ENCODE measurements at regions of chr17 and their contacts with region 1.

Region 1: DNA sequence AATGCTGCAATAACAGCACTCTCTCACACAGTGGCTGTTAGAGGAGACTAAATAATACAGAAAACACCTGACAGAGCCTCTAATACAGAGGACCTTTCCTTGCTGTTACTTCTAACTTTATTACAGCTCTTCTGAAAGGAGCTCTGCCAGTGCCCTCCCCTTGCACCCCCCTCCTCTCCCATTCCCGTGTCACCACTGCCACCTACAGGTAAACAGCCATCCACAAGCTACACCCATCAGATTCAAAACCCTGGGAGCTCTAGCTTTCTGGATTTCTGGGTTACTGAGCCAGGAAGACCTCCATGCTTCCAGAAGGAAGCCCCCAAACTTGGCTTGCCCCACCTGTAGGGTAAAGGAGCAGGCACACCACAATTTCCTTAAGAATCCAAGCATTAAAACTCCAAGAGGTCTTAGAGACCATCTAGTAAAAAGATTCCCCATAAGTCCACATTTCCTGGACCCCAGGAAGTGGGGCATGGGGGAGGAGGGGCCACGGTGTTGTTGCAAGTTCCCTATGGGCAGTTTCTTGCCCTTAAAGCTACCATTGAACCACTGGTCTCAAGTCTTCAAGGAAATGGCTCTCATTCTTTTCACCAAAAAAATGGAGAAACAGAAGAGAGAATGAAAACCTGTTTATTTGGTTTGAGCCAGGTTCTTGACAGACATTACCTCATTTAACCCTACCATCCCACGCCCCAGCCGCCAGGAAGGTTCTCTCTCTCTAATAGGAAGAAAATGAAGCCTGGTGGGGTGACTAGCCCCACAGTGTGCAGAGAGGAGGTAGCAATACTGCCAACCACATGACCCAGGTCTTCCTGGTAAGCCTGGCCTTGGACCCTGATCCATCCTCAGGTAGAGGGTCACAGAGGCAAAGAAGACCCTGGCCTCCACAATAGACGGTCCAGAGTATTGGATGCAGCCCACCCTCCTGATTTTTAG is 52.8 kb downstream of the TOM1L2 start:
- DNase-seq: peak; percentile 90
- ATAC-seq: peak; percentile 59
- H3K4me3 ChIP-seq: no peak overlapping the region
- H3K27ac ChIP-seq: peak overlapping the region; percentile 29
- H3K4me1 ChIP-seq: peaks cover 55% of the 10 kb centered on the region
- H3K27me3 ChIP-seq: no peaks in the 10 kb centered on the region
- CTCF ChIP-seq: peak; percentile 96

Region 2: DNA sequence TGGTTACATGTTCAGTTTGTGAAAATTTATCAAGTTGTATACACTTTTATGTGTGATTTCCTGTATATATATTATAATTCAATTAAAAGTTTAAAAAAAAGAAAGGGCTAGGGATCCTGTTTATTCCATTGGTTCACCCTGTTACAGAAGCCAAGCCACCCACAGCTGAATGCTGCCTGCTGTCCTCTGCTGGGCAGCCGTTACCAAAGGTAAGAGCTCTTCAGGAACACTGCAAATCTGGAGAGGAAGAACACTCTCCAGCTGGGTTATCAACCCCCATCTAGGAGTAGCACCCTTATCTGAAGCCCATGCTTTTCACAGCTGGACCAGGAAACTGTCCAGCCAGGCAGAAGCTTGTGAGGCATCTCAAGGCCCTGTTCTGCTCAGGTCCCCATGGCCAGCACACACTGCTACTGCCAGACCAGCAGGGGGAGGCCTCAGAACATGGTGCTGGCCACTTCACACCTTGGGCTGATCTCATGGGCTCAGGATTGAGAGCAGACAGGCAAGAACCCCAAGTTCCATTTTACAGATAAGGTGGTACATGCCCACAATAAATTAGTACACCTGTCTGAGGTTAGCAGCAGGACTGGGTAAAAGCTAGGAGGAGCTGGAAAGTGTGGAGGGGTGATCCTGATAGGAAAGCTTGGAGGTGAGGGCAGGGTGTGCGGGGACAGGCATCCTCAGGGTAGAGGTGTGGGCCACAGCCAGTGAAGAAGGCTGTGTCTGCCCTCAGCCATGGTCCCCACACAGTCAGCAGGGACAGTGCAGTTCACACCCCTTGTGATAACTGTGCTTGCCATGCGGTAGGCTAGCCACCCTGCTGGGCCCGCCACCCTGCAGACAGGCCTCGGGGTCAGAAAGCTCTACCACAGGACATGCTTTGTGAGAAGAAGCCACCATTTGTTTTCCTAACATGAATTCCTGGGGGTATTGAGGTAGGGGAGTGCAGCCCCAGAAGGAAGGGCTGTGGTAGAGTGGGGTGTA is 28.4 kb before region 1 on chr17:
- CTCF ChIA-PET with region 1: interaction called, 21 read pairs
- POLR2A ChIA-PET with region 1: interaction called, 3 read pairs
- intact Hi-C with region 1: loop called (anchors 1 kb)
- DNase-seq: peak; percentile 73
- ATAC-seq: peak; percentile 99
- H3K4me3 ChIP-seq: no peak overlapping the region
- H3K27ac ChIP-seq: no peak overlapping the region
- H3K4me1 ChIP-seq: no peaks in the 10 kb centered on the region
- H3K27me3 ChIP-seq: no peaks in the 10 kb centered on the region
- CTCF ChIP-seq: peak; percentile 97

Region 3: DNA sequence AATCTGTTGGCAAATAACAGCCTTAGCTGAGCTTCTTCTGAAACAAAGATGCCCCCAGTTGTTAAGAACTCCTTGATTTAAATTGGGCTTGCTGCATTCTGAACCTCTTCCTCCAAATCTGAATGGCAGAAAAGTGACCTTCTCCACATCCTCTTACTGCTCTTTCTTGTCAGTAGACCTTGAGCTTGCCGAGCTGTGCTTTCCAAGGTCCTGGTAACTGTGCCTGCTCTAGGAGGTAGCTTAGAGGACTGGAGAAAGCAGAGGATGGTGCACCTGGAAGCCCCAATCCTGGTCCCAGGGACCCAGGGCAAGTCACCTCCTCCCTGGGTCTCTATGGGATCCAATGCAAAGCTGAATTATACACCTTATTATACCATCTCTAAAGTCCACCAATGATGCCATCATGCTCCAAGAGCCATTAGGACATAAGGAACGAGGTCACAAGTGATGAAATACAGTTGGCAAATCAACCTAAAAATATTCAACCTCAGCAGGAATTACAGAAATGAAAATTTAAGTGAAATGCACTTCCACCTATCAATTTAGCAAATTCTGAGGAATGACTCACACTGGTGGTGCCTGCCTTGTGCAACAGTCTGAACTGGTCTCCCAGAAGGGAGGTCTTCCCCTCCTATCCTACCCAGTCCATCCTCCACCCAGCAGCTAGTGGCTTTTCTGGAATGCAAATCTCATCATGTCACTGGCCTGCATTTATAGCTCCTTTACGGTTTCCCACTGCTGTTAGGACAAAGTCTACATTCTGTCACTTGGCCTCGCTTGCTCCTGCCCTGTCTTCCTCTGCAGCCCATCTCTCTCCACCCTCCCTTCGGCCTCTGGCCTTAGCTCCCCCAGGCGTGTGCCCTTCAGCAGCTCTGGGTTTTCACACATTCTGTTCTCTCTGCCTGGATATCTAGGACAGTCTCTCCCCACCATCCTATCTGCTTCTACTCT is 16.2 kb after region 1 on chr17:
- CTCF ChIA-PET with region 1: interaction called, 10 read pairs
- POLR2A ChIA-PET with region 1: no interaction called
- intact Hi-C with region 1: no loop called
- DNase-seq: peak; percentile 86
- ATAC-seq: peak; percentile 70
- H3K4me3 ChIP-seq: no peak overlapping the region
- H3K27ac ChIP-seq: peak overlapping the region; percentile 12
- H3K4me1 ChIP-seq: peaks cover 42% of the 10 kb centered on the region
- H3K27me3 ChIP-seq: no peaks in the 10 kb centered on the region
- CTCF ChIP-seq: no peak

Region 4: GRCh38 chr17:17959520-17960361 is 40.3 kb after region 1 on chr17:
- CTCF ChIA-PET with region 1: interaction called, 6 read pairs
- POLR2A ChIA-PET with region 1: interaction called, 3 read pairs
- intact Hi-C with region 1: loop called (anchors 5 kb)
- DNase-seq: no peak
- ATAC-seq: no peak
- H3K4me3 ChIP-seq: peak overlapping the region; percentile 0; the same call in 1 of the 2 replicates
- H3K27ac ChIP-seq: peak overlapping the region; percentile 97
- H3K4me1 ChIP-seq: peaks cover 41% of the 10 kb centered on the region
- H3K27me3 ChIP-seq: no peaks in the 10 kb centered on the region
- CTCF ChIP-seq: no peak

Region 5: DNA sequence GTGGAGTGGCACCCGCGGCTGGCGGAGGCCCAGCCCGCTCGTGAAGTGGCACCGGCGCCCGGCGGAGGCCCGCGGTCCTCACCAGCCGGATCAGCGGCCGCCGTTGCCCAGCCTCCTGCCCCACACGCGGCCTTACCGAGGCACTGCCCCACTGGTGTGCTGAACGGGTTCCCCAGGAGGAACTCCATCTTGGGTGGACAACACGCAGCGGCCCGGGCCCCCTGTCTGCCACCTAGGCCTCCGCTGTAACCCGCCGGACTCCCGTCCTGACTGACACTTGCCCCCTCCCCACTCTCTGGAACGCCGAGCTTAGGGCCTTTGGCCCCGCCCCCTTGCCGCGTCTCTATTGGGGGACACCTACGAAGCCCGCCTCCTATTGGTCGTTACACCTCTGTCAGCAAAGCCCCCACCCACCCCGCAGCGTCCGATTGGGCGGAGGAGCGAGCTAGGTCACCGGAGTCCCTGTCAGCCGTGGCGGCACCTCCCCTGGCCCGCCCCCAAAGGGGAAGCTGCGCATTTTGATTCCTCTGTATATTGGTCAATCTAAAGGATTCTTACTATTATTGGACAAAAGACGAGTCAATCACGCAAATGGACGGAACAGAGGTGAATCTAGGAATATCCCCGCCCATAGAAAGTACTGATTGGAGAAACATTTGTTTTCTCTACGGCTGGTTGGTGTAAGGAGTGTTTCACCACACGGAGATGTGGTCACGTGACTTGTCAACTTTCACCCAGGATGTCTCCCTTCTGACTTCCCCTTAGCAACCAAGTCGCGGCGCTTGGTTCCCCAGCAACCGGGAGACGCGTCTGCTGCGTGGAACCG is 52.9 kb after region 1 on chr17 and contains the starts of genes DRC3 and TOM1L2:
- CTCF ChIA-PET with region 1: interaction called, 6 read pairs
- POLR2A ChIA-PET with region 1: interaction called, 12 read pairs
- intact Hi-C with region 1: loop called (anchors 1 kb)
- DNase-seq: peak; percentile 100
- ATAC-seq: peak; percentile 90
- H3K4me3 ChIP-seq: peak within 1 kb of the TSS; percentile 80
- H3K27ac ChIP-seq: peak within 1 kb of the TSS; percentile 30
- H3K4me1 ChIP-seq: peaks cover 13% of the 10 kb centered on the region
- H3K27me3 ChIP-seq: no peaks in the 10 kb centered on the region
- CTCF ChIP-seq: no peak
- total RNA-seq, gene DRC3: 1.9 and 2.2 TPM in 2 replicates
- total RNA-seq, gene TOM1L2: 53.3 and 77.1 TPM in 2 replicates

Region 6: DNA sequence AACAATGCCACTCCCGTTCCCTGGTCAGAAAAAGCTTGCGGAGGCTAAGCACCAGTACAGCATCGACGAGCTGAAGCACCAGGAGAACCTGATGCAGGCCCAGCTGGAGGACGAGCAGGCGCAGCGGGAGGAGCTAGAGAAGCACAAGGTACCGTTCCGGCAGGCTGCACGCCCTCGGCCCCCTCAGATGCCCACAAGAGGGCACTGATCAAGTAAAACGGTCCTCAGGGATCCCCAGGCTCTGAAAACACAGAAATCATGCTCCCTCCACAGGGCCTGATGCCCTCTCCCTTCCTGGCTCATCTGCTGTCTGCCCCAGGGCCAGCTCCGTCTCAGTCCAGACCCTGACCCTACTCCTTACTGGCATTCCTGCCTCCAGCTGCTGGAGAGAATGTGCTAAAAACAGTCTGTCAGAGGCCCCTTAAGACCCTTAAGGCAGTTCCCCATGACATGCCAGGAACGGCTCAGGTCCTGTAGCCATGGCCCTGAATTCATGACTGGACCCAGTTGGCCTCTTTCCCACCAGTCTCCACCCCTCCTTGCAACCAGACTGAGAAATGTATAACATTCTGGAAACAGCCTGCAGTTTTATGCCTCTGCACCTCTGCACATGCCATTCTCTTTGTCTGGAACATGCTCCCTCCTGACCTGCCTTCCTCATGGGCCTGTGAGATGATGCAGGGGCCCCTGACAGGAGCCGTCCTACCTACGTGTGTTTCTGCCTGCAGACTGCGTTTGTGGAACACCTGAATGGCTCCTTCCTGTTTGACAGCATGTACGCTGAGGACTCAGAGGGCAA is 75.0 kb after region 1 on chr17:
- CTCF ChIA-PET with region 1: no interaction called
- POLR2A ChIA-PET with region 1: no interaction called
- intact Hi-C with region 1: loop called (anchors 1 kb)
- DNase-seq: peak; percentile 35
- ATAC-seq: peak; percentile 7; the same call in 1 of the 2 replicates
- H3K4me3 ChIP-seq: no peak overlapping the region
- H3K27ac ChIP-seq: no peak overlapping the region
- H3K4me1 ChIP-seq: peaks cover 18% of the 10 kb centered on the region
- H3K27me3 ChIP-seq: no peaks in the 10 kb centered on the region
- CTCF ChIP-seq: peak; percentile 57

Region 7: DNA sequence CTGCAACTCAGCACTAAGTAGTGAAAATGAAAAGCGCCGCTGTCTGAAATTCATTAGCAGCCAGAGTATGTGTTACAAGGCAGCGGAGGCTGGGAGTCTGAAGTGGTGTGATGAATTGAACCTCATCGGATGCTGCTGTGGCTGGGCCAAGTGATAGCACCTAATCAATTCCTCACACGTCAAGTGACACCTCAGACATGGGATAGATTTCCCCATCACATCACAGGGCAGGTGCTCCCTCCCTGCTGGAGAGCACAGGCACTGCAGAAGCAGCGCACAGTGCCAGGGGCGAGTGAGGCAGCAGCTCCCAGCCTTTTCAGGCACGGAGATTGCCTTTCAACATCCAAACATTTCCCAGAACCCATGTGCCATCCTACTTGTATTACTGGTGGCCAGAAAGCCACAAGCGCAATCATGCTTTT is 85.5 kb after region 1 on chr17:
- CTCF ChIA-PET with region 1: no interaction called
- POLR2A ChIA-PET with region 1: no interaction called
- intact Hi-C with region 1: no loop called
- DNase-seq: no peak
- ATAC-seq: peak; percentile 49
- H3K4me3 ChIP-seq: no peak overlapping the region
- H3K27ac ChIP-seq: peak overlapping the region; percentile 36
- H3K4me1 ChIP-seq: peaks cover 39% of the 10 kb centered on the region
- H3K27me3 ChIP-seq: no peaks in the 10 kb centered on the region
- CTCF ChIP-seq: peak; percentile 49

Region 8: DNA sequence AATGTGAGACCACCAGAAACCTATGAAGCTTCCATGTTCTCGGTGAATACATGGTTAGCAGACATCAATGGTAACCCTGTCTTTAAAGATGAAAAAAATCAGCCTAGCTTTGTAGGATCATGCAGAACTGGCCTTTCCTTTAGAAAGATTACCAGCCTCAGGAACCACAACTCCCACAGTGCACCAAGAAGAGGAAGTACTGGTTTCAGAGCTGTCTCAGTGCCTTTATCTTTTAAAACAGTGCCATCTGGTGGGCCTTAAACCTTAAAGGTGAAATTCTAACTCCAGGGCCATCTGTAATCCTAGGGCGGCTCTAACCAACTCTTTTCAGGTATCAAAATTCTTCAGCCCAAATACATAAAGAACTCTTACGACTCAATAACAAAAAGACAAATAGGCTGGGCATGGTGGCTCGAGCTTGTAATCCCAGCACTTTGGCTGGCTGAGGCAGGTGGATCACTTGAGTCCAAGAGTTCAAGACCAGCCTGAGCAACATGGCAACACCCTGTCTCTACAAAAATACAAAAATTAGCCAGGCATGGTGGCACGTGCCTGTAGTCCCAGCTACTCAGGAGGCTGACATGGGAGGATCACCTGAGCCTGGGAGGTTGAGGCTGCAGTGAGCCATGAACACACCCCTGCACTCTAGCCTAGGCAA is 114.1 kb after region 1 on chr17:
- CTCF ChIA-PET with region 1: interaction called, 3 read pairs
- POLR2A ChIA-PET with region 1: no interaction called
- intact Hi-C with region 1: loop called (anchors 2 kb)
- DNase-seq: peak; percentile 93
- ATAC-seq: peak; percentile 80
- H3K4me3 ChIP-seq: no peak overlapping the region
- H3K27ac ChIP-seq: no peak overlapping the region
- H3K4me1 ChIP-seq: peaks cover 31% of the 10 kb centered on the region
- H3K27me3 ChIP-seq: no peaks in the 10 kb centered on the region
- CTCF ChIP-seq: peak; percentile 87

Measured in PC-3 (cell line).